Activated naive CD4-positive, alpha-beta T cell treated with anti-CD3 and anti-CD28 coated beads for 36 hours (primary cell): ENCODE measurements at regions of chr20 and their contacts with region 1.

Region 1: DNA sequence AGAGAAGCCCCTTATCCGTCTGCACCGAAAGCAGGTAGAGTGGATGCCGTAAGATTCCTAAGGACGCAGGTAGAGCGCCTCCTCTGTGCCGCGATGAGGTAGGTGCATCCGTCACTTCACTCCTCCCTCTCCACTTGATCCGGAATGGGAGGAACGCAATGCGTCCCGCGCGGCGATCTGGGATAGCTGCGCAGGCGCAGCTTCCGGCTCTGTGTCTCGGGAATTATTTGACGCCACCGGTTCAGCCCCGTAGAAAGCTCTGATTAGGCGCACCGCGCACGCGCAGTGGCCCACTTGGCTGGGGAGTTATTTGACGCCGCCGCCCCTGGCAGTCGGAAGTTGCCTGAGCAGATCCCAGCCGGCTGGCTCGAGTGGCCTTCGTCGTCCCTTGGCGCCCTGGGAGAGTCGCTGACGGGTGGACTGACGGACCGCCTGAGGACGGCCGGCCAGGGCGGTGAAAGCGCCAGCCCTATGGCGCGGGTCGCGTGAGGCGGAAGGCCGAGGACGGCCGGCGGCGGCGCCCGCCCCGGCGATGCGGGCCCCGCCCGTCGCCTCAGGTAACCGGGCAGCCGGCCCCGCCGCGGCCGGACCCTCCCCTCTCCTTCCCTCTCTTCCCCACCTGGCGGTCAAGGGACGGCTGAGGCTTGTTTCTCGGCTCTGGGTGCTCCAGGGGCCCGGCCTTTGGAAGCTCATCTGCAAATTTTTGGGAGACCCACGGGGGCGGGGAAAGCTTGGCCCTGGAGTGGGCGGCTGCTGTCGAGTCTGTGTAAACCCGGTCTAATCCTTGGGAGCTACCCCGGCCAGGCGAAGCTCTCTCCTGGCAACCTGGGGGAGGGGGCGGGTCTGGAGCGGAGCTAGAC is at the start of gene RALGAPB:
- DNase-seq: peak; percentile 99
- H3K4me3 Mint-ChIP-seq: peak within 1 kb of the TSS; percentile 85
- H3K27ac Mint-ChIP-seq: peak within 1 kb of the TSS; percentile 80
- H3K4me1 Mint-ChIP-seq: peaks cover 38% of the 10 kb centered on the region
- H3K27me3 Mint-ChIP-seq: no peaks in the 10 kb centered on the region
- total RNA-seq, gene RALGAPB: 22.1 to 24.0 TPM

Region 2: GRCh38 chr20:37693635-37694626 is 778.8 kb before region 1 on chr20 and contains the start of gene CTNNBL1:
- CTCF ChIA-PET with region 1: no interaction called
- intact Hi-C with region 1: loop called (anchors 1 kb)
- DNase-seq: peak; percentile 98
- H3K4me3 Mint-ChIP-seq: peak within 1 kb of the TSS; percentile 98
- H3K27ac Mint-ChIP-seq: peak within 1 kb of the TSS; percentile 86
- H3K4me1 Mint-ChIP-seq: peaks cover 26% of the 10 kb centered on the region
- H3K27me3 Mint-ChIP-seq: peaks cover 13% of the 10 kb centered on the region
- total RNA-seq, gene CTNNBL1: 66.4 to 75.4 TPM

Region 3: GRCh38 chr20:38434743-38435554 is 37.8 kb before region 1 on chr20 and contains the start of gene SNHG17:
- CTCF ChIA-PET with region 1: interaction called, 12 read pairs
- intact Hi-C with region 1: loop called (anchors 2 kb)
- DNase-seq: peak; percentile 91
- H3K4me3 Mint-ChIP-seq: peak within 1 kb of the TSS; percentile 89
- H3K27ac Mint-ChIP-seq: peak within 1 kb of the TSS; percentile 97
- H3K4me1 Mint-ChIP-seq: peaks cover 40% of the 10 kb centered on the region
- H3K27me3 Mint-ChIP-seq: no peaks in the 10 kb centered on the region
- total RNA-seq, gene SNHG17: 69.1 to 72.9 TPM

Region 4: GRCh38 chr20:38446441-38447209 is 26.1 kb before region 1 on chr20:
- CTCF ChIA-PET with region 1: interaction called, 35 read pairs
- intact Hi-C with region 1: loop called (anchors 1 kb)
- DNase-seq: peak; percentile 95
- H3K4me3 Mint-ChIP-seq: peak overlapping the region; percentile 80
- H3K27ac Mint-ChIP-seq: peak overlapping the region; percentile 84
- H3K4me1 Mint-ChIP-seq: peaks cover 42% of the 10 kb centered on the region
- H3K27me3 Mint-ChIP-seq: peaks cover 3% of the 10 kb centered on the region

Region 5: DNA sequence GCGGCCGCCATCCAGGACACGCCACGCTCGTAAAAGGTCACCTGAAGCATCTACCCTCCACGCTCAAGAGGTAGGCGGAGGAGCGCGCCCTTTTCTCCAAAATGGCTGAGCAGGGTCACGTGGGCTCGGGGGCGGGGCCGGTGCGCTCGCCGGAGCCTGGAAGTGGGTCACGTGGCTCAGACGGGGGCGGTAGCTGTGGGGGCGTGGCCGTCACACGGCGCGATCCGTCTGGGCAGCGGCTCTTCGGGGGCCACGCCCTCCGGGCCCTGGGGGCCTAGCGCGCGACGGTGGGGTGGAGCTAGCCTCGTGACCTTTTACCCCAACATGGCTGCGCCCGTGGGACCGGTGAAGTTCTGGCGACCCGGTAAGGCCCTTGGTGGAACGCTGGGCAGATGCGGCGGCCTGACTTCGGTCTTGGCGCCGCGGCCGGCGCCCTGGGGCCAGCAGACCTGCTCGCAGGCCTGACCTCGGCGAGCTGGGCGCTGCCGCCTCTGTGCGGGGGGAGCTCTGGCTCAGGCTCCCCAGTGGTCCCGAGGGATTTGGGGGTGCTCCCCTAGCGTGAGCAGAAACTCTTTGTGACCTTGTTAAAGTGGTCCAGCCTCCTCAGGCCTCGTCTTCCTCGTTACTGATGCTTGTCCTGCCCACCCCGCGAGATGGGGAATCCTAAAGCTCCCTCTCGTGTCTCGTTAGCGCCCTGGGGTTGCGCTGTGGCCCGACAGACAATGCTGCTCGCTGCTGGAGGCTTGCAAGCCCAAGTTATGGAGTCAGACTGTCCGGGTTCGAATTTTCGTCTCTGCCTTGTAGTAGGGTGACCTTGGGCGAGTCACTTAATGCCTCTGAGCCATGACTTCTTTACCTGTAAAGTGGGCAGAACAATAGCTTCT is 489.5 kb after region 1 on chr20 and contains the start of gene DHX35:
- CTCF ChIA-PET with region 1: no interaction called
- intact Hi-C with region 1: loop called (anchors 5 kb)
- DNase-seq: peak; percentile 99
- H3K4me3 Mint-ChIP-seq: peak within 1 kb of the TSS; percentile 95
- H3K27ac Mint-ChIP-seq: peak within 1 kb of the TSS; percentile 98
- H3K4me1 Mint-ChIP-seq: peaks cover 32% of the 10 kb centered on the region
- H3K27me3 Mint-ChIP-seq: no peaks in the 10 kb centered on the region
- total RNA-seq, gene DHX35: 9.5 to 10.3 TPM